Cardiac septum (tissue), 1 donor: ENCODE measurements at regions of chr10 and their contacts with region 1.

Region 1: GRCh38 chr10:44974628-44975431 is 3.8 kb downstream of the DEPP1 start:
- DNase-seq: peak; percentile 88

Region 2: GRCh38 chr10:44492662-44493061 is 482.2 kb before region 1 on chr10:
- intact Hi-C with region 1: no loop called
- DNase-seq: no peak

Region 3: GRCh38 chr10:44878706-44879530 is 95.9 kb before region 1 on chr10:
- intact Hi-C with region 1: loop called (anchors 10 kb)
- DNase-seq: peak; percentile 94

Region 4: DNA sequence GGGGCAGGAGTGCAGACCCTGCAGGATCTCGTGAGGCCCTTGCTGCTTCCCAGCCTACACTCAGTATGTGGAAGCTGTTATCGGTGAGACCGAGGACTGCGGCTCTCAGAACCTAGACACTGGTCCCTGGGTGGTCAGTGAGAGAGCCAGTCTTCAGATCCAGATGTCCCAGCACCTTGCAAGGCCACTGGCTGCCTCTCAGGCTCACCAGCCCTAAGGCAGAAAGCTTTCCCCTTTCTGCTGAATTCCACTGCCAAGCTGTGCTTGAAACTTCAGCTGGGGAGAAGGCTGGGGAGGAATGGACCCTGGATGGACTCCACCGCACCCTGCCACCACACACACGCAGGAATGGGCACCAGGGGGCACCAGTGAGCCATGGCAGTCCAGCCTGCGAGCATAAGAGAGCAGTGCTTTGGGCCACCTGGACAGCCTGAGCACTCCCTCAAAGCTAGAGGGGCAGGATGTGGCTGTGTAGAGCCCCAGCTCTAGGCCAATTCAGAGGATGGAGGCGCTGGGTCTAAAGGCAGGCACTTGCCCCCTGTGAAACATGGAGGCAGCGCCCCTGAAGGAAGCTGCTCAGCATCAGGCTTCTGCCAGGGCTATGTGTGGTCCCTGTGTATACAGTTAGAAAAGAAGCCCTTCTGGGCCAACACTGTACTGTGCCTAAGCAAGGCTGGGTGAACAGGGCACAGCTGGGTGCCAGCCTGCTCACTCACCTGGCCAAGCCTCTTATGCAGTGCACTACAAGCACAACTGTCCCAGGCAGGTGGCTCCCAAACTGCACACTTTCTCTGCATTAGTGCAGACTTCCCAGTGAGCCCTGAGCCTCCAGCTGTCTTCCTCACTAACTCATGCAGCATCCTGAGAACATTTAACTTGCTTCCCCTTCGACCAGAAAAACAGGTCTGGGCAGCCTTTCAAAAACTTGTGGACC is 42.0 kb before region 1 on chr10:
- intact Hi-C with region 1: loop called (anchors 1 kb)
- DNase-seq: peak; percentile 91

Region 5: DNA sequence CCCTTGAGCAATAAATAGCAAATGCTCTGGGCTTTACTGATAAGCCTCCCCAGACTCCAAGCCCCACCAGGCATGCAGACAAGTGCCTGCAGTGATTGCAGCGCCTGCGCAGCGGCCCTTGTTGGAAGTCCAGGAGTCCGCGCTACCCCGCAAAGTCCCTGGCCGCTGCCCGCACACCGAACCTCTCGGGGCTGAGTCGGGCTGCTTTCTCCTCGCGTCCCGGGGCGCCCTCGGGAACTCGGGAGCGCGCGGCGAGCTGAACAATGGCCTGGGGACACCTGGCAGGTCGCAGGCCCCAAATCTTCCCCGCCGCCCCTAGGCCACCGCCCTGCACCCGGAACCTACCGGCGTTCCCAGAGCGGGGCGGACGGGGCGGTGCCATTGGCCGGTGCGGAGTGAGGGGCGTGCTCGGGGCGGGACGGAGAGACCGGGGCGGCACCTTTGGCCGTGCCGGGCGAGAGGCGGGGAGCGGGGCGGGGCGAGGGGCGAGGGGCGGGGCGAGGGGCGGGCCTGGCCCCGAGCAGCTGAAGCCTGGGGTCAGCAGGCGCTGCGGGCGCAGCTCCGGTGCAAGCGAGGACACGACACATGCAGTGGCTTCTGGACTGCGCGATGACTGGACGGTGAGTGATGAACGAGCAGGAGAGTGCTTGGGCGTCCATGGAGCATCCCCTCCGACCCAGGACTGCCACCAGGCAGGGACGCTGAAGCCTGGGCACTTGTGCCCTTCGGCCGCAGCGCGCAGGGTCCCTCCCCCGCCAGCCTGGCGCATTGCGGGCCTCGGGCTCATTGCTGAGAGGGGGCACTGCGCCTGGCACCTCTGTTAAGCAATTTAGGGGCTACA is 15.4 kb before region 1 on chr10 and contains the start of gene RASSF4:
- intact Hi-C with region 1: loop called (anchors 2 kb)
- DNase-seq: peak; percentile 99
- total RNA-seq, gene RASSF4: 47.5 TPM

Region 6: DNA sequence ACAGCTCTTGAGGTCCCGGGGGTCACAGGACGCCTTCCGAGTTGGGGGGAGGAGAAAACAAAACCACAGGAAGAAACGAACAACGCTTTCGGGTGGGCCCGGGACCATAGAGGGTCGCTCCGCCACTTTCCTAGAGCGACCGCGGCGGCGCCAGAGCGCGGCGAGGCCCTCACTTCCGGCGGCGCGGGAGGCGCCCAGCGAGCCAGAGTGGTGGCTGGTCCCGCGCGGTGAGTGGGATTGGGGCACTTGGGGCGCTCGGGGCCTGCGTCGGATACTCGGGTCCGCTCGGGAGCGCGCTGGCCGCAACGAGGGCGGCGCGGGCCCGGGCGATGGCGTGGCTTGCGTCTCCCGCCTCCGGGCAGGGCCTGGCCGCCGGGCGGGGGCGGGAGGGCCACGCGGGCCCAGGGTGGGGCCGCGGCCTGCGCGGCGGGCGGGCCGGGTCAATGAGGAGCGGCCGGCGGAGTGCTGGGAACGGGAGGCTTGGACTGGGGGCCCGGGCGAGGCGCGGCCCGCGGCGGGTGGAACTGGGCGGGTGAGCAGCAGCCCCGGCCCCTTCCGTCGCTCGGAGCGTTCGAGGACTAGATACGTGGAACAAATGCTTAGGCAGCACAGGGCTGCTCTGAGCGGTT is 26.0 kb after region 1 on chr10 and contains the start of gene ZNF22:
- intact Hi-C with region 1: loop called (anchors 2 kb)
- DNase-seq: no peak
- total RNA-seq, gene ZNF22: 14.9 TPM

Region 7: GRCh38 chr10:45052700-45053099 is 77.9 kb after region 1 on chr10:
- intact Hi-C with region 1: no loop called
- DNase-seq: no peak